Prostate gland (tissue), 2 donors: ENCODE measurements at regions of chr7 and their contacts with region 1.

Region 1: DNA sequence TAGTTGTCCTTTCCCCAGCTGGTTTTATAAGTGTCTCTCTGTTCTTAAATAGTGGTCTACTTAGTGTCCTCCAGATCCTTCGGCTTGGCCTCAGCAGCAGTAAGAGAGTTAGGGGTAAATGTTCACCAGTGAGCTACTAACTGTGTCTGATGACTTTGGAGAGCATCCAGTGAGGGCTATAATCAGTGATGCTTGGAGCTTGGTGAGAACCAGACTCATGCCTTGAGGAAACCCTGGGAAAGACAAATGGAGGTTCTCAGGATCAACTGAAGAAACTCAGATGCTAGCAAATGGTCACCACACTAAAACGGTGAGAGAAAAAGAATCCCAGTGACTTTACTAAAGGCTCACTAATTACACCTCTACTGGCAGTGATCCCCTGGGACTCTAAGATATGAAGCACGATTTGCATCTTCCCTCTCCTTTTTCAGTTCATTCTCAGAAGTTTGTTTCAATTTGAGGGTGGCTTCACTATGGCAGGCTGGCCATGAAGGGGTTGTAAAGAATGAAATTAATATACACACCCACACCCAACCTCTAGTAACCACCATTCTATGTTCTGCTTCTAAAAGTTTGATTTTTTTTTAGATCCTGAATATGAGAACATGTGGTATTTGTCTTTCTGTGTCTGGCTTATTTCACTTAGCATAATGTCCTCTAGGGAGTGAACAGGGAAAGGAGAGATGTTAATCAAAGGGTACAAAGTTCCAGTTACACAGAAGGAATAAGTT is 177.9 kb downstream of the PDE1C start:
- DNase-seq: no peak
- H3K4me3 ChIP-seq: no peak overlapping the region
- H3K27ac ChIP-seq: no peak overlapping the region
- H3K4me1 ChIP-seq: no peaks in the 10 kb centered on the region
- H3K27me3 ChIP-seq: no peaks in the 10 kb centered on the region
- CTCF ChIP-seq: no peak
- POLR2A ChIP-seq: no peak

Region 2: DNA sequence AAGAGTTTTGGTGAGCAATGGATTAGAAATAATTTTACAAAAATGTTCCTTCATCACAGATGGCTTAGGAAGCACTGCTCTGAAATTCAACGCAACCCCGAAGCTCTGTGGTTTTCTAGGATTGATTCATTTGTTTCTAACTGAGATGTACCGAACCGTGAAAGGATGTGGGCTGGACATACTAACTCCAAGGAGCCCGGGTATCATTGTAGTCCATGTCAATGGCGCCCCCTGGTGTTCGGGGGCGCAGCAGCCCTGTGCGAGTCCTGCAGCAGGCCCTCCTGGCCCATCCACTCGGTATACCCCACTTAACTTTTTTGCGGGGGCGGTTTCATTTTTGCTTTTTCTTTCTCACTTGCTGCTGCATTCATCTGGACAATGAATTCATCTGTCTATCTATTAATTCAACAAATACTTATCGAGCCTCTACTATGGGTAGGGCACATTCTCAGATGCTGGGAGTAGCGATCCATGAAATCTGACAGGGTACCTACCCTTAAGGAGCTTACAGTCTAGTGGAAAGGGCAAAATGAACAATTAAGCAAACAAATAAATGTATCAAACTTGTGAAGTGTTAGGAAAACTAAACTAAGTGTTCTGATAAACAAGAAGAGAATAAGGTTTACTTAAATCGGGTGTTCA is 403.6 kb before region 1 on chr7:
- intact Hi-C with region 1: no loop called
- DNase-seq: peak; percentile 29
- H3K4me3 ChIP-seq: no peak overlapping the region
- H3K27ac ChIP-seq: no peak overlapping the region
- H3K4me1 ChIP-seq: no peaks in the 10 kb centered on the region
- H3K27me3 ChIP-seq: no peaks in the 10 kb centered on the region
- CTCF ChIP-seq: peak; percentile 4 to 72 (median 50)
- POLR2A ChIP-seq: no peak

Region 3: GRCh38 chr7:32062150-32062549 is 169.9 kb after region 1 on chr7:
- intact Hi-C with region 1: loop called (anchors 10 kb)
- DNase-seq: peak; percentile 26
- H3K4me3 ChIP-seq: no peak overlapping the region
- H3K27ac ChIP-seq: no peak overlapping the region
- H3K4me1 ChIP-seq: no peaks in the 10 kb centered on the region
- H3K27me3 ChIP-seq: no peaks in the 10 kb centered on the region
- CTCF ChIP-seq: peak in 2 of 4 experiments; percentile 12 to 38
- POLR2A ChIP-seq: no peak

Region 4: DNA sequence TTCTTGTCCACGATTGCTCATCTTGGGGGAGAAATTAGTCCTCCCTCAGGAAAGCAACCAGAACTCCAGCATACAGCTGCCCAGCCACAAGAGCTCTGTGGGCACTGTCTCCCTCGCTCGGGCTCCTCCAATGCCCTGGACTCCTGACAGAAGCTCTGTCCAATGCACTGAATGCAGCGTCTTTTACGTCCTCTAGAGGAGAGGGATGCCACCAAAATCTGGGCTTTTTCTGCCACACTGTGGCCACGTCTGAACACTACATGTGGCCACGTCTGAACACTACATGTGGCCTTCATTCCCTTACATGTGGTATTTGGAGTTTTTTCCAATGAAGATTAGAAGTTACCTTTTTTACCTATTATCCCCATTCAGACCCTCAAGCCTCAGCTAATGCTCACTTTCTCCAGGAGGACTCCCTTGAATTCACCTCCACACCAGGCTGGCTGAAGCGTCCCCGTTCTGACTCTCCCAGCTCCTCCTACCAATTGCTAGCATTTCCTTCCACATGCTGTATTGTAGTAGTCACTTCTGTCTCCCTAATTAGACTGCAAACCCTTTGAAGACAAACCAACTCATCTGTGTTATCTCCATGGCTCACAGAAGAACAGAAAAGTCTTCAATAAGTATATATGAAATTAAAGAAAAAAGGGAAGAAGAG is 312.2 kb after region 1 on chr7:
- intact Hi-C with region 1: no loop called
- DNase-seq: peak; percentile 47
- H3K4me3 ChIP-seq: no peak overlapping the region
- H3K27ac ChIP-seq: no peak overlapping the region
- H3K4me1 ChIP-seq: no peaks in the 10 kb centered on the region
- H3K27me3 ChIP-seq: no peaks in the 10 kb centered on the region
- CTCF ChIP-seq: peak; percentile 21 to 85 (median 66)
- POLR2A ChIP-seq: no peak